MCF 10A (cell line): ENCODE measurements at regions of chr4 and their contacts with region 1.

Region 1: GRCh38 chr4:121462660-121463261 is 81.9 kb upstream of the QRFPR start:
- DNase-seq: peak; percentile 85
- H3K4me3 Mint-ChIP-seq: no peak overlapping the region
- H3K27ac Mint-ChIP-seq: no peak overlapping the region
- H3K4me1 Mint-ChIP-seq: no peaks in the 10 kb centered on the region
- H3K27me3 Mint-ChIP-seq: no peaks in the 10 kb centered on the region
- CTCF ChIP-seq: peak; percentile 63

Region 2: DNA sequence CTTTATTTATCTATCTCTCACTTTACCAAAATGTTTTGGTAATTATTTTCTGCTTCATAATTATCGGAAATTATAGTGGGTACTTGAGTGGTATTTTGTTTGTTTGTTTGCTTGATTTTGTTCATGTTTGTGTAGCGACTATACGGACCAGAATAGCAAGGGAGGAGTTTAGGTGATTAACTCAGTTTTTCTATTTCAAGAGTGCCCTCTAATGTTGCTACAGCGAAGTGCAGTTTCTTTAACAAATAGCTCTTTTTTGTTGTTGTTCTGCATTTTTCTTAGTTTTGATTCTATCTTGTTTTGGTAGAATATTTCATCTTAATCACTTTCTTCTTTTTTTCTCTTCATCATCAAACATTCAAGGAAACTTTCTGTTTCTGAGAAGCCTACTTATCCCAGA is 41.2 kb before region 1 on chr4:
- CTCF ChIA-PET with region 1: interaction called, 10 read pairs
- POLR2A ChIA-PET with region 1: no interaction called
- intact Hi-C with region 1: no loop called
- DNase-seq: peak; percentile 59
- H3K4me3 Mint-ChIP-seq: no peak overlapping the region
- H3K27ac Mint-ChIP-seq: peak overlapping the region; percentile 8
- H3K4me1 Mint-ChIP-seq: peaks cover 7% of the 10 kb centered on the region
- H3K27me3 Mint-ChIP-seq: no peaks in the 10 kb centered on the region
- CTCF ChIP-seq: peak; percentile 67

Region 3: GRCh38 chr4:121477480-121477879 is 14.7 kb after region 1 on chr4:
- CTCF ChIA-PET with region 1: interaction called, 14 read pairs
- POLR2A ChIA-PET with region 1: no interaction called
- intact Hi-C with region 1: no loop called
- DNase-seq: no peak
- H3K4me3 Mint-ChIP-seq: no peak overlapping the region
- H3K27ac Mint-ChIP-seq: no peak overlapping the region
- H3K4me1 Mint-ChIP-seq: peaks cover 5% of the 10 kb centered on the region
- H3K27me3 Mint-ChIP-seq: no peaks in the 10 kb centered on the region
- CTCF ChIP-seq: no peak

Region 4: DNA sequence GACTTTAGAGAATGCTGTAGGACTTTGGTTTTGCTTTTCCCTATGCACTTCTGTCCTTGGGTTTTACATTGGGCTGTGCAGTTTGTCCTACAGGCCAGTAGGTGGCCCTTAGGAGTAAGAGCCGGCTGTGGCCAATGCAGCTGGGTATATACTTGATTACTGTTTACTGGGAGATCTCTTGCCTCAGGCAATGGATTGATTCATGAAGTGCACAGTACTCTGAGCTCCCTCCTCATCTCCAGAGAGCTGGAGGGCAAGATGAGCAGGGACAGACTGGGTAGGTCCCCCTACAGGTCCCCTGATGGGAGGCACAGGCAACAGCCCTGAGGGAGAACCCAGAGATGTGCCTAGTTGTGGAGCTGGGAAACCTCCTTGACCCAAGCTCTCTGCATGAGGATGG is 21.9 kb after region 1 on chr4:
- CTCF ChIA-PET with region 1: interaction called, 13 read pairs
- POLR2A ChIA-PET with region 1: no interaction called
- intact Hi-C with region 1: no loop called
- DNase-seq: peak; percentile 63
- H3K4me3 Mint-ChIP-seq: no peak overlapping the region
- H3K27ac Mint-ChIP-seq: no peak overlapping the region
- H3K4me1 Mint-ChIP-seq: peaks cover 5% of the 10 kb centered on the region
- H3K27me3 Mint-ChIP-seq: no peaks in the 10 kb centered on the region
- CTCF ChIP-seq: peak; percentile 68

Region 5: GRCh38 chr4:121656269-121656641 is 193.5 kb after region 1 on chr4:
- CTCF ChIA-PET with region 1: interaction called, 92 read pairs
- POLR2A ChIA-PET with region 1: interaction called, 3 read pairs
- intact Hi-C with region 1: loop called (anchors 1 kb)
- DNase-seq: peak; percentile 66
- H3K4me3 Mint-ChIP-seq: no peak overlapping the region
- H3K27ac Mint-ChIP-seq: no peak overlapping the region
- H3K4me1 Mint-ChIP-seq: peaks cover 8% of the 10 kb centered on the region
- H3K27me3 Mint-ChIP-seq: no peaks in the 10 kb centered on the region
- CTCF ChIP-seq: peak; percentile 30

Region 6: DNA sequence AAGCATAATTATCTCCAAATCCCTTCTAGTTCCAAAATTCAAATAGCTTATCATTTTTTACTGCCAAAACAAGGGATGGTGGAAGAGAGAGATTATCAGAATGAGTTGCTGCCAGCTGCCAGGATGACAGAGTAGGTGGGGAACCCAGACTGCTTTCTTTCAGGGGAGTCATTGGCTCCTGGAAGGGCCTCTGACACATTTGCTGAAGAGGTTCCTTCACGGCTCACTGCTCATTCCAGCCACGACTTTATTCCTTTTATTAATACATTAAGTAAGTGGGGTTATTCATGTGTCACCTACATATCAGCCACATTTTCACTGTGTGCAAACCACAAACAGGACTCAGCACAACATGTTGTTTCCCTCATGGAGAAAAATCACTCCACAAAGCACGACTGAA is 314.9 kb after region 1 on chr4:
- CTCF ChIA-PET with region 1: no interaction called
- POLR2A ChIA-PET with region 1: no interaction called
- intact Hi-C with region 1: no loop called
- DNase-seq: no peak
- H3K4me3 Mint-ChIP-seq: no peak overlapping the region
- H3K27ac Mint-ChIP-seq: no peak overlapping the region
- H3K4me1 Mint-ChIP-seq: peaks cover 19% of the 10 kb centered on the region
- H3K27me3 Mint-ChIP-seq: no peaks in the 10 kb centered on the region
- CTCF ChIP-seq: no peak